A673 (cell line): ENCODE measurements at regions of chr1 and their contacts with region 1.

Region 1: DNA sequence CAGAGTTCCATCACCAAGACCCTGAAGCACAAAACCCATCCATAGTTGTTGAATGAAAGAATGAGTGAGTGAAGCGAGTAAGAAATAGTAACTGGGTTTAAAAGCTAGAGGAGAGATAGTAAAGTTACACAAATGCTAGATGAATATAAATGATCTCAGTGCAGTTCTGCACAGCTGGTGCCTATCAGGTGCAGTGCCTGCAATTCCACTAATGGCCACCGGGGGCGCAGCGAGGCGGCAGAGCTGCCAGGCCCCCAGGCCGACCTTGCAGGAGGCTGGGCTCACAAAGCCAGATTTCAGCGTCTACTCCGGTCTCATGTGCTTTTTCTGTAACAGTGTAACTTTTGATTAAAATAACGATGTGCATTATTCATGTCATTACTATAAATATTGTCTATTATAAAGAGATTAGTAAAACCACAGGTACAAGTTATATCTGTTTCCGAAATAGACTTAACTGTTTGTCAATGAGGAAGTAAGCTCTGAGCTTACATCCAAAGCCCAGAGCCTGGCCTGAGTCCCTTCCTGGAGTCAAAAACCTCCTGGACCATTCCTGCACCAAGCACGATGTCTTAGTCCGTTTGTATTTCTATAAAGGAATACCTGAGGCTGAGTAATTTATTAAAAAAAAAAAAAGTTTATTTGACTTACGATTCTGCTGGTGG is 477.6 kb downstream of the NPHP4 start:
- DNase-seq: peak; percentile 60
- H3K4me3 ChIP-seq: no peak overlapping the region
- H3K27ac ChIP-seq: no peak overlapping the region
- H3K4me1 ChIP-seq: no peaks in the 10 kb centered on the region
- H3K27me3 ChIP-seq: peaks cover 8% of the 10 kb centered on the region
- CTCF ChIP-seq: peak; percentile 99

Region 2: GRCh38 chr1:5250336-5250735 is 264.3 kb before region 1 on chr1:
- CTCF ChIA-PET with region 1: no interaction called
- POLR2A ChIA-PET with region 1: no interaction called
- intact Hi-C with region 1: no loop called
- DNase-seq: no peak
- H3K4me3 ChIP-seq: no peak overlapping the region
- H3K27ac ChIP-seq: no peak overlapping the region
- H3K4me1 ChIP-seq: no peaks in the 10 kb centered on the region
- H3K27me3 ChIP-seq: no peaks in the 10 kb centered on the region
- CTCF ChIP-seq: no peak

Region 3: GRCh38 chr1:5620990-5621389 is 106.3 kb after region 1 on chr1:
- CTCF ChIA-PET with region 1: no interaction called
- POLR2A ChIA-PET with region 1: no interaction called
- intact Hi-C with region 1: loop called (anchors 5 kb)
- DNase-seq: peak; percentile 47
- H3K4me3 ChIP-seq: no peak overlapping the region
- H3K27ac ChIP-seq: no peak overlapping the region
- H3K4me1 ChIP-seq: no peaks in the 10 kb centered on the region
- H3K27me3 ChIP-seq: peaks cover 34% of the 10 kb centered on the region
- CTCF ChIP-seq: peak; percentile 63

Region 4: DNA sequence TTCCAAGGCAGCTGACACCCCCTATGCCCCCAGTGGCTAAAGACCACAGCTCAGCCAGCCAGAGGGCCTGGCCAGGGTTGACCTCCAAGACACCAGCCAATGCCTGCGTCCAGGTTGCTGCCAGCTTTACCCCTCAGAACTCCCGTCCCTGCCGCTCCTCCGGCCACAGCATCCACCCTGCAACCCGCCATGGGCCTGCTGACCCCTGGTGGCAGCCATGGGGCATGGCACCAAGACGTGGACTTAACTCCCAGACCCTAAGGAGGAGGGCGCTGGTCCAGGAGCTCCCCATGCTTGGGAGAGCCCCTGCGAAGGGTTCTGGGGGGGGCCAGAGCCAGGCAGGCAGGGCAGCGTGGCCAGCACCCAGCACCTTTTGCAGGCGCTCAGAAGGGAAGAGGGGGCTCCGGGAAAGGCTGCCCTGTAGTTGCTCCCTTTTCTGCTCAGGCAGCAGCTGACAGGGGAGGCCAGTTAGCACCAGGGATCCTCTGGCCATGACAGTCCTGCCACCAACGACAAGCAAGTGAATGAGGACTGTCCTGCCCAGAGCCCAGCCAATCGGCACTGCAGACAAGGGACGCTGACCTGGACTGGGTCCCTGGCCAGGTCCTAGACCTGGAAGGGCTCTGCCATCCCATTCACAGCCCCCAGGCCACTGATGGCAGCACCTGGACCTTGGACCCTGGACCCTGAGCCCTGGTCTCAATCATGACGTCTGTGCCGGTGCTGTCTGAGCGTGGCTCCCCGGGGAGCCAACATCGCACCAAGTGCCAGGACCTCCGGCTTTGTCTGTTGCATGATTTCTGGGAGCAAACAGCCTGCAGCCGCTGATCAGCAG is 231.3 kb after region 1 on chr1:
- CTCF ChIA-PET with region 1: interaction called, 6 read pairs
- POLR2A ChIA-PET with region 1: no interaction called
- intact Hi-C with region 1: loop called (anchors 1 kb)
- DNase-seq: peak; percentile 84
- H3K4me3 ChIP-seq: no peak overlapping the region
- H3K27ac ChIP-seq: no peak overlapping the region
- H3K4me1 ChIP-seq: peaks cover 22% of the 10 kb centered on the region
- H3K27me3 ChIP-seq: no peaks in the 10 kb centered on the region
- CTCF ChIP-seq: peak; percentile 97

Region 5: DNA sequence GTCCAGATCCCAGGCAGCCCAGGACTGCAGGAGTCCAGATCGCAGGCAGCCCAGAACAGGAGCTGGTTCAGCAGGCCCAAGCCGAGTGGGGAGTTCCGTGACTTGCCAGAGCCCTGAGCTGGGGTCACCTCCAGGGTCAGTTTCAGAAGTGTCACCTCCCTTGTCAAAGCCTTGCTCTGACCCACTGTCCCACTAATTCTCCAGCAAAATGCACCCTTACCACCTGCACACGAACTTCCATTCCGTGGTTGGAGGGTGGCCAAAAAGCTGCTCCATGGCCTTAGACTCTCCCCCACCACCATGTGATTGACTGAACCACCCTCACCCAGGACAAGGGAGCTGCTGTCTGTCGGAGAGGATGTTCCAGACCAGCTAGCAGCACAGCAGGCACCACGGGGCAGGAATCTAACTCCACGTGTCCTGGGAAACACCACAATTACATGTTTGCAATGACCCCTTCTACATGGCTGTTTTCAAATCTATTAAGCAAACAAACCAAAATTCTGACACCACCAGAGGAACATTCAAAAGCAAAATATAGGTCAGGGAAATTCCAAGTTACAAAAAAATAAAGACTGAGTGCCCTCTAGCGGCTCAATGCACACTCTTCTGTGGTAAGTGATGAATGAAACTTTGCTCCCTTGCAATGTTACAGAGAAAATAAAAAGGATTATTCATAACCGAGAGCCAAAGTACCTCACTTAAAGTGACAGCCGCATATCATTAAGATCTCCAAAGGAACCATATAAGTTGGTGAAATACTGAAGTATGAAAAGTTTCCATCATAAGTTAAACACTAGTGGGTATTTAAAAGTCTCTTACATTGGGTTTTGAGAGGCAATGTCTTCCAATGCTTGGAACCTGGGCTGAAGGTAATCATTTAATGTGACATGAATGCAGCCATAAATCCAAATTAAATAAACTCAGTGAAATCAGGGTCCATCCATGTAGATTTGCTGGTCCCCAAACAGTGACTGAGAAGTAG is 401.2 kb after region 1 on chr1:
- CTCF ChIA-PET with region 1: no interaction called
- POLR2A ChIA-PET with region 1: no interaction called
- intact Hi-C with region 1: loop called (anchors 2 kb)
- DNase-seq: peak; percentile 74
- H3K4me3 ChIP-seq: no peak overlapping the region
- H3K27ac ChIP-seq: no peak overlapping the region
- H3K4me1 ChIP-seq: peaks cover 32% of the 10 kb centered on the region
- H3K27me3 ChIP-seq: no peaks in the 10 kb centered on the region
- CTCF ChIP-seq: peak; percentile 87

Region 6: GRCh38 chr1:5975133-5975880 is 460.7 kb after region 1 on chr1:
- CTCF ChIA-PET with region 1: no interaction called
- POLR2A ChIA-PET with region 1: no interaction called
- intact Hi-C with region 1: loop called (anchors 2 kb)
- DNase-seq: peak; percentile 63
- H3K4me3 ChIP-seq: no peak overlapping the region
- H3K27ac ChIP-seq: no peak overlapping the region
- H3K4me1 ChIP-seq: peaks cover 5% of the 10 kb centered on the region
- H3K27me3 ChIP-seq: no peaks in the 10 kb centered on the region
- CTCF ChIP-seq: peak; percentile 74